Activated CD4-positive, alpha-beta memory T cell treated with anti-CD3 and anti-CD28 coated beads, Interleukin-2, amount 10 ng/mL, durations not matched to agents 7 days and 5 days (primary cell): ENCODE measurements at regions of chr7 and their contacts with region 1.

Region 1: GRCh38 chr7:98872328-98872924 is 2.6 kb upstream of the TMEM130 start:
- DNase-seq: peak; percentile 29
- H3K4me3 Mint-ChIP-seq: no peak overlapping the region
- H3K27ac Mint-ChIP-seq: no peak overlapping the region
- H3K4me1 Mint-ChIP-seq: peaks cover 8% of the 10 kb centered on the region
- H3K27me3 Mint-ChIP-seq: peaks cover 19% of the 10 kb centered on the region

Region 2: DNA sequence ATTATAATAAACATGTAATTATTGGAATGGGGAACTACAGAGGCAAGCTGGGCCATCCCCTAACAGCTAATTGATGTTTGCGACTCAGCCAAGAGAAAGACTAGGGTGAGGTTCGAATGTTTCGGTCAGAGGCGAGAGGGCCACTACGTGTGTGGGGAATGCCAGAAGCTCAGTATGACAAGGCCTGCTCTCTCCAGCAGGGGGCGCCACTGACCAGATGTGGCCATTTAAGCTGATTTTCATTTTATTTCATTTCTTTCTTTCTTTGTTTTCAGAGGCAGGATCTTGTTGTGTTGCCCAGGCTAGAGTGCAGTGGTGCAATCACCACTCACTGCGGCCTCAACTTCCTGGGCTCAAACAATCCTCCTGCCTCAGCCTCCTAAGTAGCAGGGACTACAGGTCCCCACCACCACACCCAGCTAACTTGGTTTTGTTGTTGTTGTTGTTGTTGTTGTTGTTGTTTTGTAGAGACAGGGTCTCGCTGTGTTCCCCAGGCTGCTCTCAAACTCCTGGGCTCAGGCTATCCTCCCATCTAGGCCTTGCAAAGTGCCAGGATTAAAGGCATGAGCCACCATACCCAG is 40.7 kb before region 1 on chr7:
- CTCF ChIA-PET with region 1: interaction called, 10 read pairs
- POLR2A ChIA-PET with region 1: no interaction called
- DNase-seq: peak; percentile 46
- H3K4me3 Mint-ChIP-seq: no peak overlapping the region
- H3K27ac Mint-ChIP-seq: no peak overlapping the region
- H3K4me1 Mint-ChIP-seq: no peaks in the 10 kb centered on the region
- H3K27me3 Mint-ChIP-seq: no peaks in the 10 kb centered on the region